ENCODE measurements at regions of chr10 and their contacts with region 1.

Region 1: GRCh38 chr10:4849555-4850242 is 23.7 kb downstream of the AKR1E2 start:
- DNase-seq: peak; percentile 86 to 93 (median 89)
- ATAC-seq: peak; percentile 77 to 90 (median 88)
- H3K4me3 ChIP-seq: no peak overlapping the region
- H3K27ac ChIP-seq: peak overlapping the region in 8 of 12 donors; percentile 14 to 62 (median 38)
- H3K4me1 ChIP-seq: peaks cover 0 to 38% (median 20%) of the 10 kb centered on the region in 12 donors
- H3K27me3 ChIP-seq: no peaks in the 10 kb centered on the region
- CTCF ChIP-seq: peak in 11 of 12 donors; percentile 96 to 100 (median 99)
- POLR2A ChIP-seq: no peak

Region 2: DNA sequence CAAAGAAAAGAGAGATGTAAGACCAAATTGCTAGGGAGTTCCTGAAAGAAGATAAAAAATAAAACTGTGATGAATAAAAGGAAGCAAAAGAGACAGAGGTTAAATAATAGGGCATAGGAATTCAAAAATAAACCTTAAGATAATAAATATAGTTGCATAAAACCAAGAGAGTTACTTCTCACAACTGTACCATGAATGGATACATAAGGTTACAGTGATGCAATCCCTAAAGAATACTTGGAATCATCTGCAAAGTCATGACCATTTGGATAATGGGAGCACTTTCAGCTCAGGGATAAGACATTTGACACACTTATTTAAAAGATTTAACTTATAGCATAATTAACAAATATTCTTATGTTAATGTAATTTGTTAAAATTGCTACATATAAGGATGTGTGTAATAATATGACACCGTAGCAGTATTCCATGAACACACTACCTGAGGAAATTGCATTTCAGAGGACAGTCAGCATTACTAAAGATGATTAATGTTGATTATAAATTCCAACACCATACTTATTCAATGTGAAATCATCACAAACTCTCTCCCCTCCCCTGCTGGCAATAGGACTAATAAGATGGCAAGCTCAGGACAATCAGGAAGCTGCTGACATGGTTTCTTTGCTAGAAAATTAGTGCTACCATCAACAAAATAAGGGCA is 225.8 kb before region 1 on chr10:
- intact Hi-C with region 1: no loop called
- DNase-seq: no peak
- ATAC-seq: no peak
- H3K4me3 ChIP-seq: no peak overlapping the region
- H3K27ac ChIP-seq: no peak overlapping the region
- H3K4me1 ChIP-seq: peaks cover 0 to 4% (median 0%) of the 10 kb centered on the region in 12 donors
- H3K27me3 ChIP-seq: no peaks in the 10 kb centered on the region
- CTCF ChIP-seq: no peak
- POLR2A ChIP-seq: no peak

Region 3: DNA sequence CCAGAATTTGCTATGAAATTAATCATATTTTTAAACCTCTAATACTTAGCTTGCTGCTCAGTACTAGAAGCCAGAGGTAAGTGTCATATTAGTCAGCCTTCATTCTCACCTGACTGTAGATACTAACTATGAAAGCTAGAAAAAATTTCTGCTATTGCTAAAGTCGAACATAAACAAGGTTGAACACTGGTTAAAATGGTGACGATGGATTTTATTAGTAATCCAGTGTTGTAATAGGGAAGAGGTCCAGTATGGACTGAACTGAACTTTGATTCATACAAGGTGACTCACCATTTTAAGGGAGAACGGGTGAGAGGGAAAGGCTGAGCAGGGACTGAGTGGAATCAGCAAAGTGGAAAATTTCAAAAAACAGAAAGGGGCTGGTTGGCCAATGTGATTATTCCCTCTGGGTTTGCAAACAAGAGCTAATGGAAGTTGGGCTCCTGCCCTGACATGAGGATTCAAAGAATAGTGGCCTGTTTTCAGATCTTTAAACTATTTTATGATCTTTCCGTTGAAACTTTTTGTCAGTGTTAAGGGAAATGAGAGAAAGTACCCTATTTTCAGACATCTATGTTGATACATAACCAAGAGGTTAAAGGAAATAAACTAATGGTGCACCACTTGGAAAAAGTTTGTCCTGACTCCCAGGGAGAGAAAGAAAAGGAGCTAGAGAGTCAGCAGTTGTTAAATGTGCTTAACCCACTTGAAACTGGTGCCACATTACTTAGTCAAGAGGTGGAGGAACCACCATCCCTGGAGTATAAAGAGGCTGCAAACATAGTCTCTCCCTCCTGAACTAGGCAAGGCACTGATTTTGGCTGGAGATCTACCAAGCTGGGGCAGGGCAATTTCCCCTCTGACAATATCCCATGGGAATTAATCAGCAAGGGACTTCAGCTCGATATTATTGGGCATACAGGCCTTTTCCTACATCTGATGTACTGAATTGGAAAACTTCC is 98.2 kb after region 1 on chr10:
- intact Hi-C with region 1: loop called in 2 of 10 experiments (anchors 10 kb)
- DNase-seq: peak in 4 of 5 donors; percentile 30 to 48 (median 38)
- ATAC-seq: peak; percentile 74 to 95 (median 90)
- H3K4me3 ChIP-seq: no peak overlapping the region
- H3K27ac ChIP-seq: peak overlapping the region; percentile 28 to 85 (median 66)
- H3K4me1 ChIP-seq: peaks cover 0 to 30% (median 4%) of the 10 kb centered on the region in 12 donors
- H3K27me3 ChIP-seq: no peaks in the 10 kb centered on the region
- CTCF ChIP-seq: no peak
- POLR2A ChIP-seq: no peak

Region 4: DNA sequence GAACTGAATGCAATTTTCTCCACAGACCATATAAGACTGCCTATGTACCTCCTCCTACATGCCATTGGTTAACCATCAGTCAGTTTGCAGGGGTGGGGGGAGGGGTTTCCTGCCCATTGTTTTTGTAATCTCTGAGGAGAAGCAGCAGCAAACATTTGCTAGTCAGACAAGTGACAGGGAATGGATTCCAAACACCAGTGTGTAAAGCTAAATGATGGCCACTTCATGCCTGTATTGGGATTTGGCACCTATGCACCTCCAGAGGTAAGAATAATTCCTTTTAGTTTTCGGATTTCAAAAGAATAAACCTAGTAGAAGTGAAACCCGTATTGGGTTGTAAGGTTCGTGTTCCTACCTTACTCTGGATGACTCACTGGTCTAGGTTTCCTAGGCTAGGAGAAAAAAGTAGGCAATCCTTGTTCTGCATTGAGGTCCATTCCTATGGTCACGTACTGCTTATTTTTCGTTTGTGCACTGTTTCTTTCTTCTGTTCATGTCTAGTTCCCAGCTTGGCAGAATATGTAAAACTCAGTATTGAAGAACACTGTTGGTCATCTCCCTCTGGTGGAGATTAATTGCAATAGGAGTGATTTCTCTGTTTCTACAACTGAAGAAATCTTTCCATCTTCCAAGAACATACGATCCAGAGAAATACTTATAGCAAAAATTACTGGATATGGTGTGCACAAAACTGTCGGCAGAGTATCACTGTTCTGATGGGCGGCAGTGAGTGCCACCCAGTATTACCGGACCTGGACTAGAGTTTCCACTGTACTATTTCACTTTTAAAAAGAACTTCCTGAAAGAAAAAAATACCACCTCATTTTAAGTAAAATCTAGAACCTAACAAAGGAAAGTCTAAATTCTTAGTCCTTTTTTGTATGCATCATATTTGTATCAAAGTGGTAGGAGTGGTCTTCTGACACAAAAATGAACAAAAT is 244.8 kb after region 1 on chr10 and contains the start of gene AKR1C3:
- intact Hi-C with region 1: loop called (anchors 1 to 5 kb)
- DNase-seq: peak in 1 of 5 donors; percentile 24
- ATAC-seq: peak; percentile 68 to 89 (median 83)
- H3K4me3 ChIP-seq: peak within 1 kb of the TSS; percentile 35 to 68 (median 62)
- H3K27ac ChIP-seq: peak within 1 kb of the TSS in 11 of 12 donors; percentile 49 to 85 (median 70)
- H3K4me1 ChIP-seq: peaks cover 0 to 14% (median 2%) of the 10 kb centered on the region in 12 donors
- H3K27me3 ChIP-seq: no peaks in the 10 kb centered on the region
- CTCF ChIP-seq: peak; percentile 54 to 81 (median 74)
- POLR2A ChIP-seq: peak in 1 of 2 donors; percentile 40
- total RNA-seq, gene AKR1C3: 13.9 to 25.1 (median 21.1) TPM

Region 5: GRCh38 chr10:5354068-5354467 is 504.4 kb after region 1 on chr10:
- intact Hi-C with region 1: no loop called
- DNase-seq: no peak
- ATAC-seq: no peak
- H3K4me3 ChIP-seq: no peak overlapping the region
- H3K27ac ChIP-seq: no peak overlapping the region
- H3K4me1 ChIP-seq: no peaks in the 10 kb centered on the region
- H3K27me3 ChIP-seq: peaks cover 0 to 5% (median 0%) of the 10 kb centered on the region in 9 donors
- CTCF ChIP-seq: no peak
- POLR2A ChIP-seq: no peak

Region 6: DNA sequence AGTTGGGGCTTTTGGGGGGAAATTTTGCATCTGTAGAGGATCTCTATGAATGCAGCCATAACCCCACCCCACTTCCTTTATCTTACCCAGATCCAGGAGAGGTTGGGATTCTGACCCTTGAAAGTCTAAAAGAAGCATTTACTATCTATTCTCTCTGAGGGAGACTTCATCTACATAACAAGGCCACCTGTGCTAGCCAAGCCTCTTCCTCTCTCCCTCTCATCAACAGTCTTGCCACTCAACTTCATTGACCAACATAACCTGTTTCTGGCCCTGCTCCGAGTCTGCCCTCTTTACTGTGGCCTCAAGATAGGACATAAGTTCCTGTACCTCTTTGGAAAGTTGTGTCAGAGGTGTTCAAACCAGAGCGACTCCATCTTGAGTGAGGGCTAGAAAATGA is 535.5 kb after region 1 on chr10:
- intact Hi-C with region 1: loop called in 7 of 10 experiments (anchors 2 to 10 kb)
- DNase-seq: no peak
- ATAC-seq: no peak
- H3K4me3 ChIP-seq: no peak overlapping the region
- H3K27ac ChIP-seq: no peak overlapping the region
- H3K4me1 ChIP-seq: no peaks in the 10 kb centered on the region
- H3K27me3 ChIP-seq: no peaks in the 10 kb centered on the region
- CTCF ChIP-seq: no peak
- POLR2A ChIP-seq: no peak

Region 7: GRCh38 chr10:5623081-5623748 is 773.5 kb after region 1 on chr10:
- intact Hi-C with region 1: loop called in 3 of 10 experiments (anchors 5 to 10 kb)
- DNase-seq: peak; percentile 86 to 94 (median 90)
- ATAC-seq: peak; percentile 87 to 96 (median 91)
- H3K4me3 ChIP-seq: no peak overlapping the region
- H3K27ac ChIP-seq: peak overlapping the region in 2 of 12 donors; percentile 11 to 24
- H3K4me1 ChIP-seq: peaks cover 0 to 26% (median 5%) of the 10 kb centered on the region in 12 donors
- H3K27me3 ChIP-seq: no peaks in the 10 kb centered on the region
- CTCF ChIP-seq: peak; percentile 84 to 94 (median 91)
- POLR2A ChIP-seq: no peak